ENCODE measurements at regions of chr5 and their contacts with region 1.

Region 1: GRCh38 chr5:160439205-160439600 is 17.5 kb downstream of the PTTG1 start:
- DNase-seq: peak; percentile 46
- CTCF ChIP-seq: peak; percentile 80

Region 2: GRCh38 chr5:160479926-160480325 is 40.7 kb after region 1 on chr5:
- in situ Hi-C with region 1: loop called (anchors 5 kb)
- DNase-seq: no peak
- CTCF ChIP-seq: no peak

Measured in GM13977 (cell line).